Prostate gland (tissue), 2 donors: ENCODE measurements at regions of chr5 and their contacts with region 1.

Region 1: GRCh38 chr5:39217365-39218281 is 1.7 kb downstream of the FYB1 start:
- DNase-seq: peak; percentile 64
- H3K4me3 ChIP-seq: no peak overlapping the region
- H3K27ac ChIP-seq: peak overlapping the region in 1 of 2 donors; percentile 1
- H3K4me1 ChIP-seq: no peaks in the 10 kb centered on the region
- H3K27me3 ChIP-seq: no peaks in the 10 kb centered on the region
- CTCF ChIP-seq: peak; percentile 74 to 91 (median 84)
- POLR2A ChIP-seq: no peak

Region 2: GRCh38 chr5:39283231-39283818 is 65.7 kb after region 1 on chr5:
- intact Hi-C with region 1: loop called (anchors 1 kb)
- DNase-seq: peak; percentile 24
- H3K4me3 ChIP-seq: no peak overlapping the region
- H3K27ac ChIP-seq: no peak overlapping the region
- H3K4me1 ChIP-seq: no peaks in the 10 kb centered on the region
- H3K27me3 ChIP-seq: no peaks in the 10 kb centered on the region
- CTCF ChIP-seq: peak; percentile 26 to 57 (median 46)
- POLR2A ChIP-seq: no peak

Region 3: GRCh38 chr5:39370555-39371366 is 153.1 kb after region 1 on chr5:
- intact Hi-C with region 1: loop called (anchors 5 kb)
- DNase-seq: peak; percentile 48
- H3K4me3 ChIP-seq: no peak overlapping the region
- H3K27ac ChIP-seq: no peak overlapping the region
- H3K4me1 ChIP-seq: no peaks in the 10 kb centered on the region
- H3K27me3 ChIP-seq: no peaks in the 10 kb centered on the region
- CTCF ChIP-seq: no peak
- POLR2A ChIP-seq: no peak

Region 4: DNA sequence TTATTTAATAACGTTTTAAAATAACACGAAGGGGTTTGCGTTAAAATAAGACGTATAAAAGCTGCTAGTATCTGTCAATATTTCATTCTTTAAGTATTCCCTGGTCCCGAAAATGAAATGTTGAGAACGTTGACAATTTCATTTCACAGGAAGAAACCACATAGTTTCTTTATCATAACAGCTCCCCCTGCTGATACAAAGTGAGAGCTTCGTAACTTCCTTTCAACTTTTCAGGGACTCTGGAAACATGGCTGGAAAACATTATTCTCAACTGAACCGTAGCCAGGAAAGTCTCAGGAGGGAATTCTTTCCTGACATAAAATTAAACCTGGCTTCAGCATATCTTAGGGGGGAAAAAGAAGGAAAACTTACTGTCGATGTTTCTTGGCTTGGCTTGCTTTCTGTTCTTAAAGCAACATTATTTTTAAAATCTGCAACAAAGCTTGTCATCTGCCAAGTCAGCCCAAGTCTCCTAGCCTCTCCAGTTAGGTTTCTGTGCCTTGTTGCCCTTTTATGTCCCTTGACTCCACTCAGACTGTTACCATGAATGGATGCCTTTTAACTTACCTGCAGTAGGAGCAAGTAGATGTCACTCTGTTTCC is 330.0 kb after region 1 on chr5:
- intact Hi-C with region 1: loop called (anchors 5 kb)
- DNase-seq: peak; percentile 39
- H3K4me3 ChIP-seq: no peak overlapping the region
- H3K27ac ChIP-seq: no peak overlapping the region
- H3K4me1 ChIP-seq: no peaks in the 10 kb centered on the region
- H3K27me3 ChIP-seq: no peaks in the 10 kb centered on the region
- CTCF ChIP-seq: peak; percentile 11 to 75 (median 70)
- POLR2A ChIP-seq: no peak